ENCODE measurements at regions of chr5 and their contacts with region 1.

Region 1: DNA sequence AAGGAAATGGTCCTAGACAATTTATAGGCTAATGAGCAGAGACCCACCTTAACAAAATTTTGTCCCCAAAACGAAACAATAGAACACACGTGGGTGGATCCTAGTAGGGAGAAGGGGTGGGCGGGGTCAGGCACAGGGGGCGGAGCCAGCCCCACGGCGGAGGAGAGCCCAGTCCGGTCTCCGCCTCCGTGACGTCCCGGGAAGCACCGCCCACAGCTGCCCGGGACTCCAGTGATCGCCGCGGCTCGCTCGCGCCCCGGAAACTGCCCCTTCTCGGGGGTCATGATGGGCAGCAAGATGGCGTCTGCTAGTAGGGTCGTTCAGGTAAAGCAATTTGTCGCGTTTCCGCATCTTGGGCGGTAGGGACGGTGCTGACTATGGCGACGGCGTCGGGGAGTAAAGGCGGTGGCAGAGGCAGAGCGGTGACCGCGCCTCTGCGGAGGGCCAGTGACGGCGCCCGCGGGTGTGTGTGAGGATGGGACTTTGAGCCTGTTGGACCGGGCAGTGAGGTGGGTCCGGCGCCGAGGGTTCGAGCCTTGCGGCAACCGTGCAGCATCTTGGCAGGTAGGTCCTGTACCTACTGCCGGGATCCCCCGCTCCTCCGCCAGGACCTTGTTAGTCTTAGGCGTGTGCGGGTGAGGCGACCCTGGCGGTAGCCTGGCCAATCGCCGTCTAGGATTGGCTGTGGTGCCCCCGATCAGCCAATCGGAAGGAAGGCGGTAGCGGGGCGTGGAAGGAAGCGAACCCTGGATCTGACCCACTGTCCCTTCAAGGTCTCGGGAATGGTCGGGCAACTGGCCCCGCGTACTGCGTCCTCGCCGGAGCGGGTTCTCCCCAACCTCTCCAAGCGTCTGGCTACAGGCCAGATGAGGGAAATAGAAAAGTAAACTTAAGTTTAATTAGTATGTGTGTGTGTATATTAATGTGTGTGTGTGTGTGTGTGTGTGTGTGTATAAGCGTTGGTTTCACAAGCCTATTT is 16.8 kb upstream of the CDK7 start:
- DNase-seq: peak; percentile 98
- ATAC-seq: peak; percentile 99 to 100

Region 2: DNA sequence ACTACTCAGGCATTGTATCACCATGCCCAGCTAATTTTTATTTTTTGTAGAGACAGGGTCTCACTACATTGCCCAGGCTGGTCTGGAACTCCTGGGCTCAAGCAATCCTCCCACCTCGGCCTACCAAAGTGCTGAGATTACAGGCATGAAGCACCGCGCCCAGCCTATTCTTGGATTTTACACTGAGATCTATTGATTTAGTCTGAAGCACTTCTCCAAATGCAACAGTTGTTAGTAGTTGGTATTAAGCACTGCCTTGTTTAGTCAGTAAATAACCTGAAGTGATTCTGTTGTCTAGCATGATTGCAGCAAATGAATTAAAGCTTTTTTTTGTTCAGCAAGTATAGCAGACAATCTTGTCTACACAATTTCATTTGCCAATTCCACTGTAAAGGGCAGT is 59.8 kb before region 1 on chr5:
- intact Hi-C with region 1: no loop called
- DNase-seq: no peak
- ATAC-seq: no peak

Region 3: DNA sequence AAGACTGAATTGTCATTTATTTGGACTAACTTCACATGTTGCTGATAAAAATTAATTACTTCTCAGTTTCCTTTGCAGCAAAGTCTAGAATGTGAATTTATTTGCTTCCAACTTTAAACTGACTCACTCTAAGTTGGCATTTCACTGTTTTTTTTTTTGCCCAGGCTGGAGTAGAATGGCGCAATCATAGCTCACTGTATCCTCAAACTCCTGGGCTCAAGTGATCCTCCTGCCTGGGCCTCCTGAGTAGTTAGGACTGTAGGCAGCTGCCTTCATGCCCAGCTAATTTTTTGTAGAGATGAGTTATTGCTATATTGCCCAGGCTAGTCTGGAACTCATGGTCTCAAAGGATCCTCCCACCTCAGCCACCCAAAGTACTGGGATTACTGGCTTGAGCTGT is 47.3 kb before region 1 on chr5:
- intact Hi-C with region 1: no loop called
- DNase-seq: no peak
- ATAC-seq: no peak

Region 4: DNA sequence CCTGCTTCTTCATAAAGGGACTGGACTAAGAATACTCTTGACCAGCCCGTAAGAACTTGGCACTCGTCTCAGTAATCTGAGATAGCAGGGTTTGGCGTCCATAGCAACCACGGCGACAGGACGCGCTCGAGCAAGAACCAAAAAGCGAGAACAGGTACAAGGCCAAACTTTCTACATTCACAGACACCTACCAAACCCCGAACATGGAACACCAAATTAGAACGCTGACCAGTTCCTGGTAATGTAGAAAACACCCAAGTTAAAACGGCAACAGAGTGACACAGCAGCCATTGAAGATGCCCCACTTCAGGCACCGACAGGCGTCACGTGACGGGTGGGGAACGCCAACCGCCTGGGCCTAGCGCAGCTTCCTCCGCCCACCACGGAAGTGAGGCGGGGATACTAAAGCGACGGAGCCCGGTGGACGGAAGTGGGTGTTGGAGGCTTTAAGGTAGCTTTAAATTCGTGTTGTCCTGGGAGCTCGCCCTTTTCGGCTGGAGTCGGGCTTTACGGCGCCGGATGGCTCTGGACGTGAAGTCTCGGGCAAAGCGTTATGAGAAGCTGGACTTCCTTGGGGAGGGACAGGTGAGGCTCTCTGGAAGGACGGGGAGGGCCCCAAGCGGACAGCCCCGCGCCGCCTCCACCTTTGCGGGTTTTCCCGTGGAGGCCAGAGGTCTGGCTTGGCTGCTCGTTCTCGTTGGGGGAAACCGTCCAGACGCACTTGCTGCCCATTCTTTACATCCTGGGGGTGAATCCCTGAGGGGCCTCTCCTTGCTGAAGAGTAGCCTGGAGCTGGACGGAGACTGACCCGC is 16.8 kb after region 1 on chr5 and contains the start of gene CDK7:
- intact Hi-C with region 1: loop called in 1 of 2 experiments (anchors 1 kb)
- DNase-seq: peak; percentile 96
- ATAC-seq: peak; percentile 100
- total RNA-seq, gene CDK7: 11.1 to 14.4 TPM

Region 5: GRCh38 chr5:69334793-69335268 is 117.0 kb after region 1 on chr5:
- intact Hi-C with region 1: loop called in 1 of 2 experiments (anchors 10 kb)
- DNase-seq: peak; percentile 90
- ATAC-seq: peak; percentile 89 to 90

Region 6: GRCh38 chr5:69369369-69370121 is 151.7 kb after region 1 on chr5 and contains the starts of genes AK6, RAD17 and TAF9:
- intact Hi-C with region 1: loop called in 1 of 2 experiments (anchors 5 kb)
- DNase-seq: peak; percentile 95
- ATAC-seq: peak; percentile 98 to 99
- total RNA-seq, gene AK6: 34.4 to 36.1 TPM
- total RNA-seq, gene RAD17: 15.0 to 17.4 TPM
- total RNA-seq, gene TAF9: 31.2 to 42.1 TPM